H1 (cell line): ENCODE measurements at regions of chr11 and their contacts with region 1.

Region 1: GRCh38 chr11:64996710-64997380 is at the start of gene BATF2:
- DNase-seq: peak; percentile 49 to 78
- H3K4me3 ChIP-seq: peak within 1 kb of the TSS in 3 of 4 experiments; percentile 8 to 36 (median 23); a peak in 5 of 8 replicates
- H3K27ac ChIP-seq: peak within 1 kb of the TSS; percentile 50
- H3K4me1 ChIP-seq: peaks cover 0 to 9% (median 1%) of the 10 kb centered on the region in 4 experiments; a peak in 2 of 7 replicates
- H3K27me3 ChIP-seq: no peaks in the 10 kb centered on the region
- CTCF ChIP-seq: peak; percentile 72 to 97 (median 82)
- EP300 ChIP-seq: no peak
- POLR2A ChIP-seq: 0 out of 3 replicates have a peak, but pooled peaks of 1 of the 2 experiments have one; percentile 47
- RAD21 ChIP-seq: peak; percentile 69 to 77
- total RNA-seq, gene BATF2: 1.4 and 2.0 TPM in 2 replicates

Region 2: DNA sequence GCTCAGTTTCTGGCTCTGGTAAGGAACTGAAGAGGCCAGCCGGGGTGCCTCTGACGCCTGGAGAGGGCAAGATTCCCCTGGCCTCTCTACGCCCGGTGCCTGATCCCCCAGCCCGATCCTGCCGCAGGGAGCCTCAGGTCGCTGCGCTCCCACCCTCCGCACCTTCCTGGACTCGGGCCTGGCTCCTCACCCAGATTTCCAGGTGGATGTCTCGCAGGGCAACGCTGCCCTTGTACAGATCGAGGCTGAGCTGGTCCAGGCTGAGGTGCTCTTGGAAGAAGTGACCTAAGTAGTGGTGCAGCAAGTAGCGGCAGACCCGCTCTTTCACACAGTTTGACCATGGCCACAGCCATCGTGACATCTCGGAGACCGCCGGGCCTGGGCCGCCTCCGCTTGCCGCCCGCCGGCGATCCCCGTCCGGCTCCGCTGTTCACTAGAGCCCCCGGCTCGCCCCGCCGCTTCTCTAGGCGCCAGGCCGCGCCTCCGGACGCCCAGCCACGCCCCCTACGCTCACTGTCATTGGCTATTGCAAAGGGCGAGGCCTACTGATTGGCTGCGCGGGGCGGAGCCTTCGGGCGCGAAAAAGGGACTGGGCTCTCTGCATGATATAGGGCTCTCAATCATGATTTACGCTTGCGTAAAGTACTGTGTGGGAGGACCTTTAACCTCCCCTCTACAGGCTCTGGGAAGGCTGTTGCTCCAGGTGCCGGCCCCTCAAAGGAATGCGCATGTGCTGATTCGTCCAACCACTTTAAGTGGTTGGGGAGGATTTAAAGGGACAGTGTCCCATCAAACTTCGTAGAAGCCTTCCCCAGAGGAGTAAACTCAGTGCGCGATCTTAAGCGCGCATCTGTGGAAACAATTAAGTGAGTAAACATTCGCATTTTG is 79.8 kb before region 1 on chr11 and contains the start of gene ATG2A:
- CTCF ChIA-PET with region 1: interaction called, 13 read pairs
- POLR2A ChIA-PET with region 1: no interaction called
- DNase-seq: peak; percentile 97 to 98
- H3K4me3 ChIP-seq: peak within 1 kb of the TSS; percentile 74 to 97 (median 93)
- H3K27ac ChIP-seq: peak within 1 kb of the TSS; percentile 45
- H3K4me1 ChIP-seq: peaks cover 0 to 11% (median 4%) of the 10 kb centered on the region in 4 experiments; a peak in 5 of 7 replicates
- H3K27me3 ChIP-seq: no peaks in the 10 kb centered on the region
- CTCF ChIP-seq: no peak
- EP300 ChIP-seq: no peak
- POLR2A ChIP-seq: 0 out of 3 replicates have a peak, but pooled peaks of 1 of the 2 experiments have one; percentile 36
- RAD21 ChIP-seq: no peak
- total RNA-seq, gene ATG2A: 20.9 and 22.1 TPM in 2 replicates

Region 3: DNA sequence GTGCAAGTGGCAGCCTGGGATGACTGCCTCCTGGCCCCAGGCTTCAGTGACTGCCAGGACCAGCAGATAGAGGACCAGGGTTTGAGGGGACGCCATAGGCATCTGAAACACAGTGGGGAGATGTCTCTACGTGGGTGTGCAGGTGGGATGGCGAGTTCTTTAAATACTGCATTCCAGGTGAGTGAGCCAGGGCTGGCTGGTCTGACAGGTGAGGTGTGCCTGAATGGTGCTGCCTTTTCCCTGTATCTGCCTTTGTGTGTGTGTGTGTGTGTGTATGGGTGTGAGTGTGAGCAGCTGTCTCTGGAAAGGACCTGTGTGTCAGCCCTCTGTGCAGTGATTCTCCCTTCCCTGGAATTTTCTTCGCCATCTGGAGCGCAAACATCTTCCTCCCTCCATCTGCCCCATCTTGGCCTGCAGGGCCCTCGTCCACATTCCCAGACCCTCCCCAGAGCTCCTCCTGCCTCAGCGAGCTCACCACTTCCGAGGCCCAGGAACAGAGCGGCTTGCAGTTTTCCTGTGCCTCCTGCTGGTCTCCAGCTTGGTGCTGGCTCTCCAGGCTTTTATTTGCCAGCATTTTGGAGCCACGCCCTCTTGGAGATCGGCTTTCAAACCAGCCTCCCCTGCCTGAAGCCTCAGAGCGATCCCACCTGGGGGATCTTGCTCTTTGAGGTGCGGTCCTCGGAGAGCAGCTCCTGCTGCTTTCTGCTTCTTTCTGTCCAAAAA is 61.3 kb before region 1 on chr11 and contains the start of gene GPHA2:
- CTCF ChIA-PET with region 1: interaction called, 12 read pairs
- POLR2A ChIA-PET with region 1: interaction called, 5 read pairs
- DNase-seq: peak; percentile 53 to 61
- H3K4me3 ChIP-seq: peak within 1 kb of the TSS in 2 of 4 experiments; percentile 19 to 38; a peak in 2 of 8 replicates
- H3K27ac ChIP-seq: no peak within 1 kb of the TSS
- H3K4me1 ChIP-seq: peaks cover 1 to 14% (median 7%) of the 10 kb centered on the region in 4 experiments
- H3K27me3 ChIP-seq: no peaks in the 10 kb centered on the region; a peak in 1 of 7 replicates
- CTCF ChIP-seq: peak in 2 of 3 experiments; percentile 1 to 10; a peak in 1 of 4 replicates
- EP300 ChIP-seq: no peak
- POLR2A ChIP-seq: peak in 1 of 2 experiments; percentile 41; a peak in 1 of 3 replicates
- RAD21 ChIP-seq: peak in 1 of 2 experiments; percentile 21; a peak in 2 of 4 replicates
- total RNA-seq, gene GPHA2: 0.97 and 1.5 TPM in 2 replicates

Region 4: DNA sequence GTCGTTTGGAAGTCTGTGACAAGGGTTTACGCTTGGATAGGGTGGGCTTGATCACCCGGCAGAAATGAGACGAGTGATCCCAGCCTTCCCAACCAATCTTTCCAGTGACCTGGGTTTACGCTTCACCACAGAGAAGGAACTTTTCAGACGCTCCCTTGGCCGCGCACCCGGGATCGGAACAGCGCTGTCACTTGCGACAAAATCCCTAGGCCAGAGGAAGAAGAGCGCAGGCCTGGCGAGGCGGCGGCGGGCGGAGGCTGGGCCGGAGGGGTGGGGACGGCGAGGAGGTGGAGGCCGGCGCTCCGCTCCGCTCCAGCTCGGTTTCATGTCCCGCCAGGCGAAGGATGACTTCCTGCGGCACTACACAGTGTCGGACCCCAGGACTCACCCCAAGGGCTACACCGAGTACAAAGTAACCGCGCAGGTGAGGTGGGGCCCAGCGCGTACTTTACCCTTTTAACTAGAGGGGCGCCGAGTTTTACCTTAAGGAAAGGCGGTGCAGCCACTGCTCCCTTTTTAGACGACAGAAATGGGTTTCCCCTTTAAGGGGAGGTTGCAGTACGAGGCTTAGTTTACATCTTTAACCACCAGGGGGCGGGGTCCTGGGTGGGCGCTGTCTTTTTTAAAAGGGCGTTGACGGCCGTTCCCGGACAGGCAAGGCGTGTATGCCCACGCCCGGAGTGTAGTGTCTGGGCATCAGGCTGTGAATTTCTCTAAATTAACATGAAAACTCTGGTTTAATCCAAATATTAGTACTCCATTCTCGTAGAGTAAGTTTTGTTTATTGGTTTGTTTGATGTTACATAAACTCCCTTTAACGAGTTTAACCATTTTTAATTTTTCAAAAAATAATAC is 30.6 kb after region 1 on chr11 and contains the start of gene SNX15:
- CTCF ChIA-PET with region 1: interaction called, 10 read pairs
- POLR2A ChIA-PET with region 1: no interaction called
- DNase-seq: peak; percentile 68 to 95
- H3K4me3 ChIP-seq: peak within 1 kb of the TSS; percentile 31 to 65 (median 58)
- H3K27ac ChIP-seq: no peak within 1 kb of the TSS
- H3K4me1 ChIP-seq: peaks cover 0 to 4% (median 2%) of the 10 kb centered on the region in 4 experiments; a peak in 5 of 7 replicates
- H3K27me3 ChIP-seq: no peaks in the 10 kb centered on the region
- CTCF ChIP-seq: peak; percentile 13 to 49 (median 44)
- EP300 ChIP-seq: 0 out of 3 replicates have a peak, but pooled peaks of 1 of the 2 experiments have one; percentile 31
- POLR2A ChIP-seq: no peak
- RAD21 ChIP-seq: peak; percentile 16 to 28; a peak in 2 of 4 replicates
- total RNA-seq, gene SNX15: 18.3 and 19.6 TPM in 2 replicates